A673 (cell line): ENCODE measurements at regions of chr19 and their contacts with region 1.

Region 1: GRCh38 chr19:3586124-3586626 is 897 bp downstream of the GIPC3 start:
- DNase-seq: peak; percentile 57
- H3K4me3 ChIP-seq: peak overlapping the region; percentile 43
- H3K27ac ChIP-seq: no peak overlapping the region
- H3K4me1 ChIP-seq: no peaks in the 10 kb centered on the region
- H3K27me3 ChIP-seq: peaks cover 4% of the 10 kb centered on the region
- CTCF ChIP-seq: peak; percentile 89

Region 2: DNA sequence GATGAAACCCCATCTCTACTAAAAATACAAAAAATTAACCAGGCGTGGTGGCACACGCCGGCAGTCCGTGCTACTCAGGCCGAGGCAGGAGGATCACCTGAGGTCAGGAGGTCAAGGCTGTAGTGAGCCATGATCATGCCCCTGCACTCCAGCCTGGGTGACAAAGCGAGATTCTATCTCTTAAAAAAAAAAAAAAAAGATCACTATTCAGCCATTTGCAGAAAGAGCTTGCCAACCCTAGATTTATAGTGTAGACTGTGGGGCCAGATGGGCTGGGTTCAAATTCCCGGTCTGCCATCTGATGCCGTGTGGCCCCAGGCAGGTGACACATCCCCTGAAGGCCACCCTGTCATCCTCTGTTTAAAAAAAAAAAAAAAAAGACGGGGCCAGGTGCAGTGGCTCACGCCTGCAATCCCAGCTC is 134.7 kb before region 1 on chr19:
- CTCF ChIA-PET with region 1: interaction called, 11 read pairs
- POLR2A ChIA-PET with region 1: no interaction called
- intact Hi-C with region 1: no loop called
- DNase-seq: no peak
- H3K4me3 ChIP-seq: no peak overlapping the region
- H3K27ac ChIP-seq: no peak overlapping the region
- H3K4me1 ChIP-seq: no peaks in the 10 kb centered on the region
- H3K27me3 ChIP-seq: no peaks in the 10 kb centered on the region
- CTCF ChIP-seq: no peak

Region 3: DNA sequence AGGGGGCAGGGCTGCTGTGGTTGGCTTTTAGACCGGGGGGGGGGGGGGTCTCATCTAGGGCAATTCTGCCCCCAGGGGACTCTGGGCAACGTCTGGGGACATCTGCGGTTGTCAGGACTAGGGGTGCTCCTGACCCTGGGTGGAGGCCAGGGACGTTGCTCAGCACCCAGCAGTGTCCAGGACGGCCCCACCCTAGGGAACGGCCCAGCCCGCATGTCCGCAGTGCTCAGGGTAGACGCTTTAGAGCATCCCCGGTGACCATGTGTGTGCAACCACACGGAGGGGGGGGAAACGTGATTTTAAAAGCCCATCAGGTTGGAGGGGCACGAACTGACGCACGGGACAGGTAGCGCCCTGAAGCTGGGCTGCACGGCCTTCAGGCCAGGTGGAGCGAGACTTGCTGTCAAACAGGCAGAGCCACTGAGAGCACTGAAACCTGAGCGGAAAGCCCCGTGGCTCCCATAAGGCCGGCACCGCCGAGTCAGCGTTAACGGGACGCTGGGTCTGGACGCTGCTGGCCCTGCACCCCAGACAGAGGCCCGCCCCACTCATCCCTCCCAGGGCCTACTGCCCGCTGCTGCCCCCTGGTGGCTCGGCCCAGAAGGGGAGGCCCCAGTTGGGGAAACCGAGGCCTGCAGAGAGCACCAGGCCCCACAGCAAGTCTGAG is 32.1 kb after region 1 on chr19:
- CTCF ChIA-PET with region 1: no interaction called
- POLR2A ChIA-PET with region 1: no interaction called
- intact Hi-C with region 1: loop called (anchors 2 kb)
- DNase-seq: peak; percentile 66
- H3K4me3 ChIP-seq: no peak overlapping the region
- H3K27ac ChIP-seq: no peak overlapping the region
- H3K4me1 ChIP-seq: no peaks in the 10 kb centered on the region
- H3K27me3 ChIP-seq: no peaks in the 10 kb centered on the region
- CTCF ChIP-seq: peak; percentile 95